ENCODE measurements at regions of chr6 and their contacts with region 1.

Region 1: DNA sequence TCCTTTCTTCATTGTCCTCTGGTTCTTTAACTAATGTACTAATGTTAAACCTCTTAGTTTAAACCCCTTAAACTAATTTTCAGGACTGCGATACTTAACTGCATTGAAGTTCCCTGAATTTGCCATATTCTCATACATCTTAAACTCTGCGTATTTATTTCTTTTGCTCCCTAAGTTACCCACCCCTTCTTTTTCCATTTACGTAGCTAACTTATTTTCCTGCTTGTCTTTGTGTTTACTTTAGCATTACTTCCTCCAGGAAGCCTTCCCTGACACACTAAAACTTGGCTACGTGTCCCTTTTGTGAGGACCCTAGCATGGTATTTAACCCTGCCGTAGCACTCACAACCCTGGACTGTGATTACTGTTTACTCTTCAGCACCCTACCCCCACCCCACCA is 79.0 kb downstream of the UBR2 start:
- DNase-seq: no peak
- ATAC-seq: no peak
- H3K4me3 ChIP-seq: no peak overlapping the region
- H3K27ac ChIP-seq: no peak overlapping the region
- H3K4me1 ChIP-seq: no peaks in the 10 kb centered on the region
- H3K27me3 ChIP-seq: no peaks in the 10 kb centered on the region
- CTCF ChIP-seq: no peak
- POLR2A ChIP-seq: no peak
- RAD21 ChIP-seq: no peak

Region 2: GRCh38 chr6:42555477-42556457 is 87.0 kb before region 1 on chr6:
- CTCF ChIA-PET with region 1: no interaction called
- POLR2A ChIA-PET with region 1: no interaction called
- dilution Hi-C with region 1: no loop called
- in situ Hi-C with region 1: no loop called
- intact Hi-C with region 1: no loop called
- DNase-seq: peak; percentile 32
- ATAC-seq: peak; percentile 40; the same call in 1 of the 2 replicates
- H3K4me3 ChIP-seq: no peak overlapping the region
- H3K27ac ChIP-seq: no peak overlapping the region
- H3K4me1 ChIP-seq: no peaks in the 10 kb centered on the region
- H3K27me3 ChIP-seq: no peaks in the 10 kb centered on the region
- CTCF ChIP-seq: no peak
- POLR2A ChIP-seq: no peak
- RAD21 ChIP-seq: no peak

Region 3: GRCh38 chr6:42599558-42599957 is 43.2 kb before region 1 on chr6:
- CTCF ChIA-PET with region 1: no interaction called
- POLR2A ChIA-PET with region 1: no interaction called
- dilution Hi-C with region 1: no loop called
- in situ Hi-C with region 1: no loop called
- intact Hi-C with region 1: loop called (anchors 10 kb)
- DNase-seq: no peak
- ATAC-seq: no peak
- H3K4me3 ChIP-seq: no peak overlapping the region
- H3K27ac ChIP-seq: no peak overlapping the region
- H3K4me1 ChIP-seq: no peaks in the 10 kb centered on the region
- H3K27me3 ChIP-seq: no peaks in the 10 kb centered on the region
- CTCF ChIP-seq: no peak
- POLR2A ChIP-seq: no peak
- RAD21 ChIP-seq: no peak

Region 4: GRCh38 chr6:42674780-42675179 is 32.0 kb after region 1 on chr6:
- CTCF ChIA-PET with region 1: no interaction called
- POLR2A ChIA-PET with region 1: no interaction called
- dilution Hi-C with region 1: no loop called
- in situ Hi-C with region 1: no loop called
- intact Hi-C with region 1: loop called (anchors 5 kb)
- DNase-seq: no peak
- ATAC-seq: no peak
- H3K4me3 ChIP-seq: no peak overlapping the region
- H3K27ac ChIP-seq: no peak overlapping the region
- H3K4me1 ChIP-seq: no peaks in the 10 kb centered on the region
- H3K27me3 ChIP-seq: no peaks in the 10 kb centered on the region
- CTCF ChIP-seq: no peak
- POLR2A ChIP-seq: no peak
- RAD21 ChIP-seq: no peak

Region 5: DNA sequence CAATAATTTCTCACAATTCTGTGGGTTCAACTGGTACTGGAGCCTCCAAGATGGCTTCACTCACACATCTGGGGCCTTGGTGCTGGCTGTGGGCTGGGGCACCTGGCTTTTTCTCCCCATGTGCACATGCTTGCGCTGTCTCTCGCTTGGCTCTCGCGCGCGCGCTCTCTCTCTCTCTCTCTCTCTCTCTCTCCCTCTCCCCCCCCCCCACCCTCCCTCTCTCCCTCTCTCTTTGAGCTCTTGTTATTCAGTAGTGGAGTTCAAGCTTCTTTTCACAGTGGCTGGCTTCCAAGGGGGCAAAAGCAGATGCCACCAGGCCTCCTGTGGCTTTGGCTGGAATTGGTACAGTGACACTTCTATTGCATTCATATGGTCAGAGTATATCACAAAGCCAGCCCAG is 113.9 kb after region 1 on chr6:
- CTCF ChIA-PET with region 1: no interaction called
- POLR2A ChIA-PET with region 1: no interaction called
- dilution Hi-C with region 1: no loop called
- in situ Hi-C with region 1: no loop called
- intact Hi-C with region 1: no loop called
- DNase-seq: no peak
- ATAC-seq: no peak
- H3K4me3 ChIP-seq: no peak overlapping the region
- H3K27ac ChIP-seq: no peak overlapping the region
- H3K4me1 ChIP-seq: no peaks in the 10 kb centered on the region
- H3K27me3 ChIP-seq: no peaks in the 10 kb centered on the region
- CTCF ChIP-seq: no peak
- POLR2A ChIP-seq: no peak
- RAD21 ChIP-seq: no peak